Common myeloid progenitor, CD34-positive (primary cell): ENCODE measurements at regions of chr1 and their contacts with region 1.

Region 1: GRCh38 chr1:3618881-3619671 is 5.7 kb upstream of the TPRG1L start:
- DNase-seq: peak; percentile 90 to 95 (median 94)
- H3K4me3 ChIP-seq: peak overlapping the region in 3 of 7 experiments; percentile 22 to 54 (median 35)
- H3K27ac ChIP-seq: no peak overlapping the region
- H3K4me1 ChIP-seq: peaks cover 0 to 32% (median 25%) of the 10 kb centered on the region in 4 experiments
- H3K27me3 ChIP-seq: no peaks in the 10 kb centered on the region

Region 2: DNA sequence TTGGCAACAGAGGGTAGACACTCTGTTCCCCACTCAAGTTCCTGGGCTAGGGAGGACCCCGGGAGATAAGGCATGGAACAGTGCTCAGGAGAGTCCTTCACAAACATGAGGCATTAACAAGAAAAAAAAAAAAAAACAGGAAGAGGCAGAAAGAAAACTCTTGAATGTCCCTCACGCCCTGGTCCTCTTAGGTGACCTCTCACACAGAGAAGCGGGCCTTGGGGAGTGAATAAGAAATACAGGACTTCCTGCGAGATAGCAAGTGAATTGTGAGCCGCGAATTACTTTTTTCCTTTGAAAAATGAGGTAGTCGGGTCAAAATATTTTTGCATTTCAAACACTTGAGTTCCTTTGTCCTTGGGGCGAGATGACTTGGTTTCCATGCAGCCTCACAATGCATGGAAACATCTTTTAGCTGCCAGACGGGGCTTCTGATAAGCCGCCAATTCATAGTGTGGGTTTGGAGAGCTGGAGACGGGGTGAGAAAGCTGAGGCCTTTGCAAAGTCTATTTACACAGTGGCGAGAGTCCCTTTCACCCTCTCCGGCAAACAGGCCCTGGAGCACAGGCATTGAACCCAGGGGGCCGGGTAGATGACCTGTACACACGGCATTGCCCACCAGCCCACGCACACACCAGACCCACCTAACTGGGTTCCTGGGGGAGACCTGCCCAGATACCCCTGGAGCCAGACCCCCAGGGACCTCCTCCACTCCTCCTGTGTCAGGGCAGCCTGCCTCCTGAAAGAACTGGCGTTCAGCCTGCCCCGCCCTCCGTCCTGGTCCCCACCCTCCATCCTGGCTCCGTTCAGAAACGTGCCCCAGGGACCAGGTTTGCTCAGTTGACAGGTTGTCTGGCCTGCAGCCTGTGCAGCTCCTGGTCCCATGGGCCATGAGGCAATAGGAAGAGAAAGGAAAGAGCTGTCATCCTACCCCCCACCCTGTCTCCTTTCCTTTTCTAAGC is 357.8 kb before region 1 on chr1:
- CTCF ChIA-PET with region 1: no interaction called
- POLR2A ChIA-PET with region 1: no interaction called
- DNase-seq: no peak
- H3K4me3 ChIP-seq: no peak overlapping the region
- H3K27ac ChIP-seq: no peak overlapping the region
- H3K4me1 ChIP-seq: no peaks in the 10 kb centered on the region
- H3K27me3 ChIP-seq: no peaks in the 10 kb centered on the region

Region 3: GRCh38 chr1:3483801-3484444 is 135.2 kb before region 1 on chr1:
- CTCF ChIA-PET with region 1: interaction called, 12 read pairs
- POLR2A ChIA-PET with region 1: no interaction called
- DNase-seq: peak in 2 of 3 donors; percentile 34 to 48
- H3K4me3 ChIP-seq: no peak overlapping the region
- H3K27ac ChIP-seq: no peak overlapping the region
- H3K4me1 ChIP-seq: peaks cover 0 to 1% (median 0%) of the 10 kb centered on the region in 4 experiments
- H3K27me3 ChIP-seq: peaks cover 0 to 24% (median 0%) of the 10 kb centered on the region in 5 experiments

Region 4: GRCh38 chr1:3491291-3492246 is 127.5 kb before region 1 on chr1:
- CTCF ChIA-PET with region 1: interaction called, 13 read pairs
- POLR2A ChIA-PET with region 1: no interaction called
- DNase-seq: peak; percentile 53 to 78 (median 77)
- H3K4me3 ChIP-seq: peak overlapping the region in 4 of 7 experiments; percentile 29 to 59 (median 38)
- H3K27ac ChIP-seq: no peak overlapping the region
- H3K4me1 ChIP-seq: peaks cover 0 to 8% (median 3%) of the 10 kb centered on the region in 4 experiments
- H3K27me3 ChIP-seq: no peaks in the 10 kb centered on the region

Region 5: DNA sequence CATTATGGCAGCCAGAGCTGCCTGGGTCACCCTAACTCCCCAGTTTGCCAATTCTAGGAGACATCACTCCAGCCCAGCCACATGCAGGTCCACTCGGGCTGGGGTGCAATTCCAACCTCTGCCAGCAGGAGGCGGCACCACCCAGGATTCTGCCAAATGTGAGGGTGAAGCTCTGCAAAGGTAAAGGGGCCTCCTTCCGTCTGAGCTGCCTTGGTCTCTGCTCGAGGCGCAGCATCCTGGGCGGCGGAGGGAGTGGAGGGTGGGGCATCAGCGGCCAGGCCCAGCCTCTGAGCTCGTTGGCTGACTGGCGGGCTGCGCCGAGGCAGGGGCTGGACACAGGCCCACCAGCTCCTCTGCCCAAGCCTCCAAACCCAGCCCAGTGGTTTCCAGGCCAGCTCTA is 100.8 kb before region 1 on chr1:
- CTCF ChIA-PET with region 1: interaction called, 11 read pairs
- POLR2A ChIA-PET with region 1: no interaction called
- DNase-seq: peak in 2 of 3 donors; percentile 22 to 42
- H3K4me3 ChIP-seq: no peak overlapping the region
- H3K27ac ChIP-seq: no peak overlapping the region
- H3K4me1 ChIP-seq: peaks cover 0 to 37% (median 21%) of the 10 kb centered on the region in 4 experiments
- H3K27me3 ChIP-seq: no peaks in the 10 kb centered on the region

Region 6: GRCh38 chr1:3746830-3747521 is 127.9 kb after region 1 on chr1:
- CTCF ChIA-PET with region 1: no interaction called
- POLR2A ChIA-PET with region 1: no interaction called
- DNase-seq: peak; percentile 79 to 89 (median 85)
- H3K4me3 ChIP-seq: peak overlapping the region; percentile 48 to 82 (median 75)
- H3K27ac ChIP-seq: peak overlapping the region in 1 of 2 experiments; percentile 43
- H3K4me1 ChIP-seq: peaks cover 0 to 31% (median 18%) of the 10 kb centered on the region in 4 experiments
- H3K27me3 ChIP-seq: peaks cover 0 to 3% (median 0%) of the 10 kb centered on the region in 5 experiments